Activated CD4-positive, alpha-beta memory T cell treated with anti-CD3 and anti-CD28 coated beads, Interleukin-2, amount 10 ng/mL, durations not matched to agents 7 days and 5 days (primary cell): ENCODE measurements at regions of chr3 and their contacts with region 1.

Region 1: GRCh38 chr3:49339945-49340800 is at the start of gene USP4:
- DNase-seq: peak; percentile 95
- H3K4me3 Mint-ChIP-seq: peak within 1 kb of the TSS; percentile 95
- H3K27ac Mint-ChIP-seq: peak within 1 kb of the TSS; percentile 98
- H3K4me1 Mint-ChIP-seq: peaks cover 42% of the 10 kb centered on the region
- H3K27me3 Mint-ChIP-seq: no peaks in the 10 kb centered on the region
- total RNA-seq, gene USP4: 77.8 to 85.0 TPM

Region 2: GRCh38 chr3:49302613-49303012 is 37.6 kb before region 1 on chr3:
- CTCF ChIA-PET with region 1: interaction called, 9 read pairs
- POLR2A ChIA-PET with region 1: interaction called, 10 read pairs
- DNase-seq: no peak
- H3K4me3 Mint-ChIP-seq: no peak overlapping the region
- H3K27ac Mint-ChIP-seq: peak overlapping the region; percentile 44
- H3K4me1 Mint-ChIP-seq: peaks cover 24% of the 10 kb centered on the region
- H3K27me3 Mint-ChIP-seq: no peaks in the 10 kb centered on the region

Region 3: GRCh38 chr3:49358217-49358883 is 18.2 kb after region 1 on chr3 and contains the start of gene GPX1:
- CTCF ChIA-PET with region 1: interaction called, 37 read pairs
- POLR2A ChIA-PET with region 1: interaction called, 55 read pairs
- DNase-seq: peak; percentile 84
- H3K4me3 Mint-ChIP-seq: peak within 1 kb of the TSS; percentile 90
- H3K27ac Mint-ChIP-seq: peak within 1 kb of the TSS; percentile 86
- H3K4me1 Mint-ChIP-seq: peaks cover 39% of the 10 kb centered on the region
- H3K27me3 Mint-ChIP-seq: no peaks in the 10 kb centered on the region
- total RNA-seq, gene GPX1: 71.5 to 76.8 TPM

Region 4: GRCh38 chr3:49428697-49429100 is 88.5 kb after region 1 on chr3:
- CTCF ChIA-PET with region 1: interaction called, 18 read pairs
- POLR2A ChIA-PET with region 1: interaction called, 14 read pairs
- DNase-seq: no peak
- H3K4me3 Mint-ChIP-seq: peak overlapping the region; percentile 82
- H3K27ac Mint-ChIP-seq: peak overlapping the region; percentile 95
- H3K4me1 Mint-ChIP-seq: peaks cover 36% of the 10 kb centered on the region
- H3K27me3 Mint-ChIP-seq: no peaks in the 10 kb centered on the region

Region 5: DNA sequence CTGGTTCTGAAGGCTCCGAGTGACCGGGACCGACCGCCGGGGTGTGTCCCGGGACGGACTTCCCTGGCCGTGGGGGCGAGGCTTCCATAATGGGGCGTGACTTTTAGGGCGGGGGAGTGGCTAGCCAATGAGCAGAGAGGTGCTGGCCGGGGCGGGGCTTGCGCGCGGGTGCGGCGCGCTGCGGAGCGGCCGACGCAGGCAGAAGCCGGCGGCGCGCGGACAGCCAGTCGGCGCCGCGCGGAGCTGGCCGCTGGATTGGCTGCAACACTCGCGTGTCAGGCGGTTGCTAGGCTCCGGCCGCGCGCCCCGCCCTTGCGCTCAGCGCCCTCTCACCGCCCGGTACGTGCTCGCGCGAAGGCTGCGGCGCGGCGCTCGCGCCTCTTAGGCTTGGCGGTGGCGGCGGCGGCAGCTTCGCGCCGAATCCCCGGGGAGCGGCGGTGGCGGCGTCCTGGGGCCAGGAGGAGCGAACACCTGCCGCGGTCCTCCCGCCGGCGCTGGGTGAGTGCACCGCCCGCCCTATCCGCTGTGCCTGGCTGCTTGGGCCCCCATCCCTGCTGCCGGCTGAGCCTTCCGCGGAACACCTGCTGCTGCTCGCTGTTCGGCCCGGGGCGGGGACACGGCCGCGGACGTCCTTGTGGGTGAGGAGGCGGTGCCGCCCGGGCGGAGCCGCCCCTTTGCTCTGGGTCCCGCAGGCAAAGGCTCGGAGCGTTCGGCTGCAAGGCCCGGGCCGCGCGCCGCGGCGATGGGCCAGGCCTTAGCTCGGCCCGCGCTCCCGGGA is 130.0 kb after region 1 on chr3 and contains the start of gene DAG1:
- CTCF ChIA-PET with region 1: interaction called, 12 read pairs
- POLR2A ChIA-PET with region 1: interaction called, 22 read pairs
- DNase-seq: peak; percentile 97
- H3K4me3 Mint-ChIP-seq: peak within 1 kb of the TSS; percentile 89
- H3K27ac Mint-ChIP-seq: peak within 1 kb of the TSS; percentile 94
- H3K4me1 Mint-ChIP-seq: peaks cover 22% of the 10 kb centered on the region
- H3K27me3 Mint-ChIP-seq: no peaks in the 10 kb centered on the region
- total RNA-seq, gene DAG1: 13.8 to 16.5 TPM

Region 6: DNA sequence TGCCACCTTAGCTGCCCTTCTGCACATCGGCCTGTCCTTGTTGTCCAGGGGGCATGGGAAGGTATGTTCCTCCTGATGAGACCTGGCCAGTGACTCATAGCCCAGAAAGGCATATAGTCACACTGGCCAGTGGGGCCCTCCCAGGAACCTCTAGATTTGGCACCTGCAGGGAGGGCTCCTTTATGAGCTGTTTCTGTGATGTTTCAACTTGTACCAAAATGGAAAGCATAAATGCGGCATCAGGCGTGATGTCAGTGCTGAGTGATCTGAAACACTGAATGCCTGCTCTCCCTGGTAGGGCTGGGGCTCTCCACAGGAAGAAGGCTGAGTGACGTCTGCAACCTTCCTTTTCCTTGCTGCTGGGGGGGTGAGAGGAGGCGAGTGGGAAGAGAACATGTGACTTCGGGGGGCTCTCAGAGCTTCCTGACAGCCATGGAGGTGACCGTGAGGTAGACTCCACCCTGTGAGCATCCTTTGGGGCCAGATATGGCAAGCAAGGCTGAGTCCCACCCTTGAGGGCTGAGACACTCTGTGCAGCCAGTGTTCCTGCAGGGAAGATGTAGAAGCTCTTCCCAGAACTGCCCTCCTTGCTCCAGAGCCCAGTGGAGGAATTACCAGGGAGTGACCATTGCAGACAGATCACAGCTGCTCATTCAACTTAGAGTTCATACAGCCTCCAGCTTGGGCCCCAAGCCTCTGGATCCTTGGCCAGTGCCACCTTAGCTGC is 296.9 kb after region 1 on chr3:
- CTCF ChIA-PET with region 1: no interaction called
- POLR2A ChIA-PET with region 1: no interaction called
- DNase-seq: no peak
- H3K4me3 Mint-ChIP-seq: no peak overlapping the region
- H3K27ac Mint-ChIP-seq: no peak overlapping the region
- H3K4me1 Mint-ChIP-seq: peaks cover 5% of the 10 kb centered on the region
- H3K27me3 Mint-ChIP-seq: peaks cover 11% of the 10 kb centered on the region